ENCODE measurements at regions of chr9 and their contacts with region 1.

Region 1: GRCh38 chr9:12775679-12776512 is 1.1 kb downstream of the LURAP1L start:
- DNase-seq: peak; percentile 38 to 83 (median 58)
- ATAC-seq: peak; percentile 59 to 96 (median 90)
- H3K4me3 ChIP-seq: peak overlapping the region; percentile 66 to 89 (median 80)
- H3K27ac ChIP-seq: peak overlapping the region; percentile 79 to 92 (median 86)
- H3K4me1 ChIP-seq: peaks cover 0 to 30% (median 7%) of the 10 kb centered on the region in 12 donors
- H3K27me3 ChIP-seq: no peaks in the 10 kb centered on the region
- CTCF ChIP-seq: peak; percentile 26 to 69 (median 47)
- POLR2A ChIP-seq: no peak

Region 2: GRCh38 chr9:12739014-12739652 is 36.8 kb before region 1 on chr9:
- intact Hi-C with region 1: loop called in 2 of 10 experiments (anchors 2 to 5 kb)
- DNase-seq: no peak
- ATAC-seq: no peak
- H3K4me3 ChIP-seq: no peak overlapping the region
- H3K27ac ChIP-seq: no peak overlapping the region
- H3K4me1 ChIP-seq: peaks cover 0 to 5% (median 0%) of the 10 kb centered on the region in 12 donors
- H3K27me3 ChIP-seq: no peaks in the 10 kb centered on the region
- CTCF ChIP-seq: no peak
- POLR2A ChIP-seq: no peak

Region 3: DNA sequence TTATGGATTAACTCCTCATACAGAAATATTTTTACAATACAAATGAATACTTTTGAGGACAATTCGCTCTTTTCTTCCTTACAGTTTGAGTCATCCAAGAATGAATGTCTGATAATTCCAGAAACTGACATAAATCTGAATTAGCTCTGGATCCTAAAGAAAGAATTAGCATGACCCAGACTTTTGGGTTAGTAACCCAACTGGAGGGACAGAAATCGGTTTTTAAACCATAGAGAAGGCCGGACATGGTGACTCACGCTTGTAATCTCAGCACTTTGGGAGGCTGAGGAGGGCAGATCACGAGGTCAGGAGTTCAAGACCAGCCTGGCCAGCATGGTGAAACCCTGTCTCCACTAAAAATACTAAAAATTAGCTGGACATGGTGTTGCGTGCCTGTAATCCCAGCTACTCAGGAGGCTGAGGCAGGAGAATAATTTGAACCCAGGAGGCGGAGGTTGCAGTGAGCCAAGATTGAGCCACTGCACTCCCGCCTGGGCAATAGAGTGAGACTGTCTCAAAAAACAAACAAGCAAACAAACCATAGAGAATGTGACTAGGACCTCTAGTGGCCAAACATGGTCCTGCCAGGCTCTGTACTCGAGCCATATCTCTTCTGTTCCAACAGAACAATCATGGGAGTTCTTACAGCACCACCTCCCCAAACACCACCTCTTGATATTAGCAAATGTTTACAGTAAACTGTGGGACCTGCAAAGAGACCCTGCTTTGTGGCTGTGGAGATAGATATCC is 43.7 kb after region 1 on chr9:
- intact Hi-C with region 1: loop called in 5 of 10 experiments (anchors 2 to 5 kb)
- DNase-seq: no peak
- ATAC-seq: no peak
- H3K4me3 ChIP-seq: no peak overlapping the region
- H3K27ac ChIP-seq: peak overlapping the region in 1 of 12 donors; percentile 25
- H3K4me1 ChIP-seq: peaks cover 0 to 21% (median 4%) of the 10 kb centered on the region in 12 donors
- H3K27me3 ChIP-seq: no peaks in the 10 kb centered on the region
- CTCF ChIP-seq: peak in 11 of 12 donors; percentile 7 to 50 (median 32)
- POLR2A ChIP-seq: no peak

Region 4: DNA sequence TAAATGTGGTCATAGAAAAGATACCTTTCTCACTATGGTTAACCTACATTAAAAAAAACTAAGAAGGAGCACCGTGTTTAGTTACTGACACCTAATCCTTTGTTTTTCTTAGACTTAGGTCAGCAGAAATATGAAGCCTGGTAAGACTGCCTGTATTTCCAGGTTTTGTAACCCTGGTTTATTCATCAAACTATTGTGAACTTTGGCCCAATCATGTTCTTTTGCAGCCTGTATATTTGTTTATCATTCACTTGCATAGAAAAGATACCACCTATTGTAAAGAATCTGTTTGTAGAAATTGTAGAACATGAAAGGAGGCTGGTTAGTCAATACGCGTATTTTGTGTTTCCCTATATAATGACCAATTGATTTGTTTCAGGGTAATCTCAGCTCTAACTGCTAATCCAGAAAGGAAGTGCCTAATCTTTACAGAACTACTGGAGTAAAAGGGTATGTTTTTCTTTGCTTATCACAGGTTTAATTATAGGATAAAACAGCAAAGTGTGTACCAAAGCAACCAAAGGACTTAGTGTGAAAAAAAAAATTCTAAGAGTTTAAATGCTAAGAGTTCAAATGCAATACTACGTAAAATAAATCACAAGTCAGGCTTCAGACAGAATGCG is 102.6 kb after region 1 on chr9:
- intact Hi-C with region 1: loop called in 7 of 10 experiments (anchors 2 to 5 kb)
- DNase-seq: no peak
- ATAC-seq: no peak
- H3K4me3 ChIP-seq: no peak overlapping the region
- H3K27ac ChIP-seq: no peak overlapping the region
- H3K4me1 ChIP-seq: peaks cover 0 to 21% (median 5%) of the 10 kb centered on the region in 12 donors
- H3K27me3 ChIP-seq: no peaks in the 10 kb centered on the region
- CTCF ChIP-seq: no peak
- POLR2A ChIP-seq: no peak

Region 5: DNA sequence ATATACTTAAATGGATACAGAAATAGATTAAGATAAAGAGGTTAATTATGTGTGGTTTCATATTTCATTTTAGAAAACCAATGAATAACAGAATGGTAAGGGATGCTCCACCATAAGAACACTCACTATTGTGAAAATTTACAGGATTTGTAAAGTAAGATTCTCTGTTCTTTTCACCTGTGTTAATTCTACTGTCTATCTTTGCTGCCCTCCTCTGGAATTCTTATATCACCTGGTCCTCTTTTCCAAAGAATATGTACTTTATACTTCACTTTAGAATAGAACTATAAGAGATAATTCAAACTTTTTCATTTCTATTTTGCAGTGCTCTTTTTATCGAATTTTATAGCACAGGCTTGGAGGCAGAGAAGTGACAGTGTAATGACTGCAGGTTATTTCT is 212.4 kb after region 1 on chr9:
- intact Hi-C with region 1: loop called in 1 of 10 experiments (anchors 10 kb)
- DNase-seq: no peak
- ATAC-seq: no peak
- H3K4me3 ChIP-seq: no peak overlapping the region
- H3K27ac ChIP-seq: no peak overlapping the region
- H3K4me1 ChIP-seq: no peaks in the 10 kb centered on the region
- H3K27me3 ChIP-seq: no peaks in the 10 kb centered on the region
- CTCF ChIP-seq: peak in 2 of 12 donors; percentile 9 to 11
- POLR2A ChIP-seq: no peak

Measured in heart left ventricle (tissue), 16 donors.